ENCODE measurements at regions of chr5 and their contacts with region 1.

Region 1: DNA sequence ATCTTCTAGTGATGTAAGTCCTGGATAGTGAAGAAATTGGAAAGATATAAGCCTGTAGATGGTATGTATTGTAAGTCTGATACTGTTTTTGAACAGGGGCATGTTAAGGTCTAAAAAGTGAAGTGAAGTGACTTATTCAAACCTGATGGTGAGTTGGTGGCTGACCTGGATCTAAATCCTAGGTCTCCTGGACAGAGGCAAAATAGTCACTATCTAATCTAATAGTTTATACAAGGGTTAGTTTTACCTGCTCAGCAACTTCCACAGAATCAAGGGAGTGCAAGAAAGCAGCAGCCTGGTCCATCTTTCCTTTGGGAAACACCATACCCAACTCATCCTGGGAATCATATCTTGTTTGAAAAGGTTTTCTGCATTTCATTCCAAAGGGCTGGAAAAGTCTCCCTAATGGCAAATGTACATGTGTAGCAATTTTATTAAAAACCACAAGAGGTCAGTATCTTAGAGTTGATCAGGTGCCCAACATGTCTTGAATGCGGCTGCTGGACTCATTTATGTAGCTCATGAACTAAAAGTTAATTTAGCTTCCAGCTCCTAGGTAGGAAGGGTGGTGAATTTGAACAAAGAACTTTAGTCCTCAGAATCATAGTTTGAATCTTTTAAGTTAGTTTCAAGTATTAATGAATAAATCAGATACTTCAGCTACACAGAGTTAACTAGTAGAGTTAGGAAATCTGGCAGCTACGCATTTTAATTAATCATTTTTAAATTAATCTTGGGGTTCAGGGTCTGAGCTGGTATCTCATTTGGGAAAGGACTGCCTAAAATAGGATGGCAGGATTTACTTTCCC is 26.0 kb downstream of the SKP2 start:
- DNase-seq: peak in 1 of 2 experiments; percentile 11
- H3K4me3 ChIP-seq: no peak overlapping the region
- H3K27ac ChIP-seq: no peak overlapping the region
- H3K4me1 ChIP-seq: no peaks in the 10 kb centered on the region
- H3K27me3 ChIP-seq: no peaks in the 10 kb centered on the region
- CTCF ChIP-seq: peak; percentile 83

Region 2: DNA sequence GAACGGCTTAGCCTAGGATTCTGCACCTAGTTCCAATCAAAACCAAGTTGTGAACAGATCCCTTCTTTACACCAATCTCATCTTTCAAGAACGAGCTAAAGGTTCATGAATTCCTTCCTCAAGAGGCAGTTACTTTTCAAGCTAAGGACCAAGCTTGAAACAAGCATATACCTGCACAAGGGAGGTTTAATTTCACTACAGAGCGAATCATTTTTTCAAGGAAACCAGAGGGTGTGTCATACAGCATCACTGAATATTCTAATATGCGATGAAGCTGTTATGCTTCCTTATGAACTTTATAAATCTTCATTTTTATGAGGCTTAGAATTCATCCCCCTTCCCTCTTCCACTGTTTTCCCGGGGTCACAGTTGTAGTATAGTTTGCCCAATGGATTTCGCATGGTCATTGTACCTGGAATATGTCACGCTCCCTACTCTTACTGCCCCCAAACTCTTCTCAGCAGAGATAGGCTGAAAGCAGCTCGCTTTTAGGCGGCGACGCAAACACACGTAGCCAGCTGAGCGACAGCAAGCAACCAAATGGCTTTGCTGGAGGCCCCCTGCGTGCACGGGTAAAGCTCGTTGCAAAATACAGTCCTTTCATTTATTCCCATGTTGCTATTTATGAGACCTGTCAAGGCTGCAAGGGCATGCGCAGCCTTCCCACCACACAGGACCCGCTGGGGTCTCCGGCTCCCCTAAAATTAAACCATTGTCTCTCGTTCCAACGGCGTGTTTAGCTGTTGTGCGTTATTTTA is 27.1 kb before region 1 on chr5:
- CTCF ChIA-PET with region 1: no interaction called
- POLR2A ChIA-PET with region 1: no interaction called
- intact Hi-C with region 1: no loop called
- DNase-seq: peak; percentile 67 to 71
- H3K4me3 ChIP-seq: peak overlapping the region; percentile 90
- H3K27ac ChIP-seq: peak overlapping the region; percentile 38
- H3K4me1 ChIP-seq: peaks cover 17% of the 10 kb centered on the region
- H3K27me3 ChIP-seq: no peaks in the 10 kb centered on the region
- CTCF ChIP-seq: no peak

Region 3: GRCh38 chr5:36161361-36161760 is 16.6 kb before region 1 on chr5:
- CTCF ChIA-PET with region 1: interaction called, 4 read pairs
- POLR2A ChIA-PET with region 1: no interaction called
- intact Hi-C with region 1: loop called (anchors 2 kb)
- DNase-seq: no peak
- H3K4me3 ChIP-seq: no peak overlapping the region
- H3K27ac ChIP-seq: no peak overlapping the region
- H3K4me1 ChIP-seq: no peaks in the 10 kb centered on the region
- H3K27me3 ChIP-seq: no peaks in the 10 kb centered on the region
- CTCF ChIP-seq: no peak

Region 4: GRCh38 chr5:36200513-36200912 is 22.6 kb after region 1 on chr5:
- CTCF ChIA-PET with region 1: no interaction called
- POLR2A ChIA-PET with region 1: no interaction called
- intact Hi-C with region 1: no loop called
- DNase-seq: peak in 1 of 2 experiments; percentile 51
- H3K4me3 ChIP-seq: no peak overlapping the region
- H3K27ac ChIP-seq: no peak overlapping the region
- H3K4me1 ChIP-seq: no peaks in the 10 kb centered on the region
- H3K27me3 ChIP-seq: no peaks in the 10 kb centered on the region
- CTCF ChIP-seq: no peak

Region 5: GRCh38 chr5:36241631-36242533 is 64.0 kb after region 1 on chr5 and contains the start of gene NADK2:
- CTCF ChIA-PET with region 1: interaction called, 8 read pairs
- POLR2A ChIA-PET with region 1: no interaction called
- intact Hi-C with region 1: loop called (anchors 2 kb)
- DNase-seq: peak; percentile 93 to 99
- H3K4me3 ChIP-seq: peak within 1 kb of the TSS; percentile 93
- H3K27ac ChIP-seq: peak within 1 kb of the TSS; percentile 81
- H3K4me1 ChIP-seq: peaks cover 39% of the 10 kb centered on the region
- H3K27me3 ChIP-seq: no peaks in the 10 kb centered on the region
- CTCF ChIP-seq: peak; percentile 71
- total RNA-seq, gene NADK2: 43.7 and 55.7 TPM in 2 replicates

Region 6: DNA sequence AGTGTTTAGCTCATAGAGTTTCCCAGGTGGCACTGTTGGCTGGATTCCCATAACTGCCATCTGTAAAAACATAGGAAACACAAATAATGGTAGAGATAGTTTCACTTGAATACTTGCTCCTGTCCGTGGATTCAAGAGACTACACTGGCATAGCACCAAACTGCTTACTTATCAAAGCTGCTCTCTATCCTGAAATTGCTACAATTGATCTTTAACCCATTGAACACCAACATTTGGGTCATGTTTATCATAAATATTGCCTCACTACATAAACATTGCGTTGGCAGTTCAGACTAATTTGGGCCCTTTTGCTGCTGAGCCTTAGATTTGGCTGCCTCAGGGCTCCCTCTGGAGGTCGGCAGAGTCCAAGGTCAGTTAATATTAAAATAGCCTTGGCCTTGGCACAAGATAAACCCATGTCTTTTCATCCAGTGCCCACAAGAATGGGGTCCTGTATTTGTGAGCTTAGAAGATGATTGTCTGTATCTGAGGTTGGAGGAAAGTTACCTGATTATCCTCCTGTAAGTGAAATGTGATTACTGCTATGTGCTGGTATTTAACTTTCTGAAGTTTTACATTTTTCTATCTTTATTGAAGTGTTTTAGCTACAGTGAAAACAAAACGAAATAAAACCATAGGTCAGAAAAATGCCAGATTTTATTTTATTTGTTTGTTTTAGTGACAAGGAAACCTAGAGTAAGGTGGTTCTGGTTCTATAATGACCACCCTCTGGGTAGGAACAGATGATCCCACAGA is 127.8 kb after region 1 on chr5:
- CTCF ChIA-PET with region 1: interaction called, 7 read pairs
- POLR2A ChIA-PET with region 1: no interaction called
- intact Hi-C with region 1: loop called (anchors 1 kb)
- DNase-seq: peak; percentile 48 to 52
- H3K4me3 ChIP-seq: no peak overlapping the region
- H3K27ac ChIP-seq: no peak overlapping the region
- H3K4me1 ChIP-seq: 0 out of 2 replicates have a peak, but pooled peaks cover 4% of the 10 kb centered on the region
- H3K27me3 ChIP-seq: no peaks in the 10 kb centered on the region
- CTCF ChIP-seq: peak; percentile 83

Region 7: DNA sequence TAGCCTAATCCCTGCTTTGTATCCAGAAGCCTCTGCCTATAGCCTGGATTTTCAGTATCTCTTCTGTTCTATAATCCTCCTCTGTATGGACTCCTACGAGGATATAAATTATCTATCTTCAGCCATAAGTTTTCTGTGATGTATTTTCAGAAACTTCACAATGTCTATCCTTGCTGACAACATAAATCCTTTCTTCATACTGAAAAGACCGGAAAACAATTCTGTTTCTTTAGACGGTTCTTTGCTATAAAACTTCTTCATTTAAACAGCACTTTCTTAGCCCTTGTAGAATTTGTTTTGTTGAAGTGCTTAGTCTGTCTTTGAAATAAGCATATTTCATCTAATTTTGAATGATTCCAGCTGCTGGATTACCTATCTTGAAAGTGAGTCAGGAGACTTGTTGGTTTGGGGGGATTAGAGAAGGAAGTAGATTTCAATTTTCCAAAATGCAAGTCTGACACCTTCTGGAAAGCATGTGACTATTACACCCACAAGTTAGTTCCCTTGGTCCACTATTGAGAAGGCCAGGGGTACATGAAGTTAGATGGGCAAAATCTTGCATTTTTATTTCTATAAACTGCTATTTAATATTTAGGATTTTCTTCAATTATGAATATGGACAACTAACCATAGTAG is 220.1 kb after region 1 on chr5:
- CTCF ChIA-PET with region 1: no interaction called
- POLR2A ChIA-PET with region 1: no interaction called
- intact Hi-C with region 1: loop called (anchors 5 kb)
- DNase-seq: no peak
- H3K4me3 ChIP-seq: no peak overlapping the region
- H3K27ac ChIP-seq: no peak overlapping the region
- H3K4me1 ChIP-seq: no peaks in the 10 kb centered on the region
- H3K27me3 ChIP-seq: no peaks in the 10 kb centered on the region
- CTCF ChIP-seq: peak; percentile 62; the same call in 1 of the 2 replicates

Region 8: DNA sequence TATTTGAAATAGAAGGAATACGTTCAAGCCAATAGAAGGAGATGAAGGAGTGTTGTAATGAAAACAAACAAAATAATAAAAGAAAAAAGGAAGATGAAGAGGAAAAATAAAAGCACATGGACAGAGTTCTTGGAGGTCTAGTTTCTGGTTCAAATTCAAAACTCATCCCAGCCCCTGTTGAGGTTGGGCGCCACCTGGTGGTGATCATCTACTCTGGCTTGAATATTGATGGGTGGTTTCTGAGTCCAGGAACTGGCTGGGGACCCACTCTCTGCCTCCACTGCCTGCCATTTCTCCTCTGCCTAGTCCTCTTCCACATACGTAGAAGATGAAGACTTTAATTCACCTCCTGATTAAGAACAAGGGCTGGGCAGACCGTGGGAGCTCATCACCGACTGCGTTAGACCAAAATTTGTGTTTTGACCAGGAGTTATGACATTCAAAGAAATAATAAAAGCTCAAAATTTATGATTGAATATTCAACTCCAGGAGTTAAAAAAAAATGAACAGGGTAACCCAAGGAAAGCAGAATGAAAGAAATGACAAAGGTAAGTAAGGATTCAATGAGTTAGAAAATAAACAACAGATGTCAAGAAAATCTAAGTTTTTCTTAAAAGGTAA is 329.5 kb after region 1 on chr5:
- CTCF ChIA-PET with region 1: interaction called, 3 read pairs
- POLR2A ChIA-PET with region 1: no interaction called
- intact Hi-C with region 1: loop called (anchors 1 kb)
- DNase-seq: peak; percentile 52 to 74
- H3K4me3 ChIP-seq: no peak overlapping the region
- H3K27ac ChIP-seq: no peak overlapping the region
- H3K4me1 ChIP-seq: peaks cover 14% of the 10 kb centered on the region
- H3K27me3 ChIP-seq: no peaks in the 10 kb centered on the region
- CTCF ChIP-seq: peak; percentile 98

Region 9: GRCh38 chr5:36690041-36690961 is 512.4 kb after region 1 on chr5:
- CTCF ChIA-PET with region 1: no interaction called
- POLR2A ChIA-PET with region 1: no interaction called
- intact Hi-C with region 1: loop called (anchors 5 kb)
- DNase-seq: peak; percentile 25 to 56
- H3K4me3 ChIP-seq: no peak overlapping the region
- H3K27ac ChIP-seq: no peak overlapping the region
- H3K4me1 ChIP-seq: peaks cover 5% of the 10 kb centered on the region; the same call in 1 of the 2 replicates
- H3K27me3 ChIP-seq: no peaks in the 10 kb centered on the region
- CTCF ChIP-seq: no peak